H1 (cell line): ENCODE measurements at regions of chr14 and their contacts with region 1.

Region 1: GRCh38 chr14:64671591-64671990 is 32.6 kb upstream of the PLEKHG3 start:
- DNase-seq: no peak
- H3K4me3 ChIP-seq: no peak overlapping the region
- H3K27ac ChIP-seq: no peak overlapping the region
- H3K4me1 ChIP-seq: peaks cover 0 to 4% (median 0%) of the 10 kb centered on the region in 4 experiments; a peak in 2 of 7 replicates
- H3K27me3 ChIP-seq: no peaks in the 10 kb centered on the region
- CTCF ChIP-seq: peak in 2 of 3 experiments; percentile 73 to 77; a peak in 3 of 4 replicates
- EP300 ChIP-seq: no peak
- POLR2A ChIP-seq: no peak
- RAD21 ChIP-seq: peak; percentile 85 to 91

Region 2: DNA sequence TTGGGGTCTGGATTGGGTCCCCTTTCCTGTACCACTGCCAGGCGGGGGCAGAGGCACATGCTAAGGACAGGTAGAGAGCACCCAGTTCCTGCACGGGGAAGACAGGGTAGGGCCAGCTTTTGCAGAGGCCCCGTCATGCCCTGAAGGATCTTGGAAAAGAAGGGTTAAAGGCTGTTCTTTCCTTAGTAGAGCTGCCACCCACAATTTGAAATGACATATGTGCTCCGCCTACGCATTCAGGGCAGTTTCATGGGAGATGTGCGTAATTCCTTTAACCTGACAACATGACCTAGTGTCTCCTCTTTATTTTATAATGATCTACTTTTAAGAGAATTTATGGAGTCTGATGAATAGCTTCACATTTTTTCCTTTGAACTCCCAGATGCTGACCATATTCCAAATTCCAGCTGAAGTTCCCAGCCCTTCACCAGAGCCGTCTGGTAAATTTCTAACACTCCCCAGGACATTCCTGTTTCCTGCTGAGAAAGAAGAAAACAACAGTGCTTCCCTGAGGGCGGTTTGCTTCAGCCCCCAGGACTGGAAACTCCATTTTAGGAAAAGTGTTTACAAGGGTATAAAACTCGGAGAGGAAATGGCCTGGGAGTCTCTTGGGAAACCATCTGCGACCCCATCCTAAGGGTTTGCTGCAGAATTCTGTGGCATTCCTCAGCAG is 26.2 kb before region 1 on chr14:
- CTCF ChIA-PET with region 1: interaction called, 13 read pairs
- POLR2A ChIA-PET with region 1: interaction called, 5 read pairs
- DNase-seq: peak in 1 of 2 experiments; percentile 81
- H3K4me3 ChIP-seq: peak overlapping the region in 1 of 4 experiments; percentile 36; a peak in 1 of 8 replicates
- H3K27ac ChIP-seq: peak overlapping the region; percentile 68; the same call in 1 of the 2 replicates
- H3K4me1 ChIP-seq: peaks cover 3 to 16% (median 12%) of the 10 kb centered on the region in 4 experiments; a peak in 5 of 7 replicates
- H3K27me3 ChIP-seq: no peaks in the 10 kb centered on the region; a peak in 1 of 7 replicates
- CTCF ChIP-seq: no peak
- EP300 ChIP-seq: peak in 1 of 2 experiments; percentile 86; a peak in 2 of 3 replicates
- POLR2A ChIP-seq: no peak
- RAD21 ChIP-seq: no peak; a peak in 1 of 4 replicates

Region 3: GRCh38 chr14:64688811-64689281 is 17.3 kb after region 1 on chr14:
- CTCF ChIA-PET with region 1: interaction called, 11 read pairs
- POLR2A ChIA-PET with region 1: no interaction called
- DNase-seq: no peak
- H3K4me3 ChIP-seq: no peak overlapping the region
- H3K27ac ChIP-seq: no peak overlapping the region
- H3K4me1 ChIP-seq: peaks cover 0 to 9% (median 3%) of the 10 kb centered on the region in 4 experiments; a peak in 3 of 7 replicates
- H3K27me3 ChIP-seq: peaks cover 0 to 5% (median 5%) of the 10 kb centered on the region in 4 experiments; a peak in 4 of 7 replicates
- CTCF ChIP-seq: no peak
- EP300 ChIP-seq: no peak
- POLR2A ChIP-seq: no peak
- RAD21 ChIP-seq: no peak

Region 4: DNA sequence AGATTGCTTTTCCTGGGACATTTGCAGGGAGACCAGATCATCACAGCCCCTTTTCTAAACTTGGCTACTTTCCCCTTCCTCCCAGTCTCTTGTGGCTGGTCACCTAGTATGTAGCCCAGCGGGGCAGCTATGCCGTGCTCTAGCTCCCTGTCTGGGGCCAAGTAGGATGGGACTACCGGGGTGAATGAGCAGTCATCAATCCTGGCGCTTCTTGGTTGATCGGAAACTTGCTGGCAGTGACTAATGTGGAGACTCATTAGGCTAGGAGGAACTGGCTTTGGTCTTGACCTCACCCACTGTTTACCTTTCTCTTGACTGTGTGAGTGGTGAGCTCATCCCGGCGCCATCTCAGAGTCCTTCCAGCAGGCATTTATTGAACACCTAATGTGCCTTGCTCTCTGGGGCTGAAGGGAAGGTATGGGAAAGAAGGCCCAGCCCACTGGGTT is 48.6 kb after region 1 on chr14:
- CTCF ChIA-PET with region 1: interaction called, 33 read pairs
- POLR2A ChIA-PET with region 1: interaction called, 3 read pairs
- DNase-seq: no peak
- H3K4me3 ChIP-seq: no peak overlapping the region
- H3K27ac ChIP-seq: no peak overlapping the region
- H3K4me1 ChIP-seq: peaks cover 55 to 77% (median 63%) of the 10 kb centered on the region in 4 experiments
- H3K27me3 ChIP-seq: 0 out of 7 replicates have a peak, but pooled peaks cover 0 to 3% (median 0%) of the 10 kb centered on the region in 4 experiments
- CTCF ChIP-seq: no peak
- EP300 ChIP-seq: no peak
- POLR2A ChIP-seq: no peak
- RAD21 ChIP-seq: no peak

Region 5: DNA sequence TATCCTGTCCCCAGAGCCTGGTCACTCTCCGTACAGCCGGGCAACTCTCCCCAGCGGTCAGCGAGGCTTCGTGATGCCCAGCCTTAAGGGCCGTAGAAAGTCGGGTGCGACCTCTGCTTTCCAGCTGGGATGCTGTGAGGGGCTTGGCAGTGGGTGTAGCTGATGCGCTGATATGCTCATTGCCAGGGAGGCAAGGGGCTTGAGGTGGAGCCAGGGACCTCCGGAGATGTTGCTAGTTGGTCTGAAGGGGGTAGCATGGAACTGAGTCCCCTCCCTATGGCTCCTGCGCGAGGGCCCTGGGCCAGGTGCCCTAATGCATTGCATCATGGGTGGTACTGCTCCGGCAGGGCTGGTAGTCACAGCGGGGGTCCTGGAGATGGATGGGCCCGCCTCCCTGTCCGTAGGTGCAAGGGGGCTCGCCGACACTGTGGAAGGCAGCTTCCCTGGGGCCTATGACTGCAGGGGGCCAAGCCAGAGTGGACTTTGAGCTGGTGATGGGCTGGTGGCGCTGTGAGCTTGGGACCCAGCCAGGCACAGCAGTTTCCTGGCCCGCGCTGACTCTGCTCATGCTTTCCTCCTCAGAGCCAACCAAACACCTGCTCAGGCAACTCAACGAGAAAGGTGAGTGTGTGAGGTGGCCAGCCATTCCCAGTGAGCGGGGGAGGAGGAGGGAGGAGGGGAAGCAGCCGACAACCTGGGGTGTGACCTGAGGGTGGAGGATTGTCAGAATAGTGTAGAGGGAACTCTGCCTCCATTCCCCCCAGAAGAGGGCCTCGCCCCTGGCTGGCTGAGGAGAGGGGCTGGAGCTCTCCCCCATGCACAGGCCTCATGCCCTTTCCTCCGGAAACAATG is 64.9 kb after region 1 on chr14:
- CTCF ChIA-PET with region 1: interaction called, 19 read pairs
- POLR2A ChIA-PET with region 1: no interaction called
- DNase-seq: peak in 1 of 2 experiments; percentile 62
- H3K4me3 ChIP-seq: no peak overlapping the region
- H3K27ac ChIP-seq: no peak overlapping the region
- H3K4me1 ChIP-seq: peaks cover 0 to 13% (median 6%) of the 10 kb centered on the region in 4 experiments; a peak in 6 of 7 replicates
- H3K27me3 ChIP-seq: no peaks in the 10 kb centered on the region
- CTCF ChIP-seq: peak; percentile 59 to 66 (median 63)
- EP300 ChIP-seq: no peak
- POLR2A ChIP-seq: no peak
- RAD21 ChIP-seq: peak; percentile 38 to 60; a peak in 3 of 4 replicates

Region 6: DNA sequence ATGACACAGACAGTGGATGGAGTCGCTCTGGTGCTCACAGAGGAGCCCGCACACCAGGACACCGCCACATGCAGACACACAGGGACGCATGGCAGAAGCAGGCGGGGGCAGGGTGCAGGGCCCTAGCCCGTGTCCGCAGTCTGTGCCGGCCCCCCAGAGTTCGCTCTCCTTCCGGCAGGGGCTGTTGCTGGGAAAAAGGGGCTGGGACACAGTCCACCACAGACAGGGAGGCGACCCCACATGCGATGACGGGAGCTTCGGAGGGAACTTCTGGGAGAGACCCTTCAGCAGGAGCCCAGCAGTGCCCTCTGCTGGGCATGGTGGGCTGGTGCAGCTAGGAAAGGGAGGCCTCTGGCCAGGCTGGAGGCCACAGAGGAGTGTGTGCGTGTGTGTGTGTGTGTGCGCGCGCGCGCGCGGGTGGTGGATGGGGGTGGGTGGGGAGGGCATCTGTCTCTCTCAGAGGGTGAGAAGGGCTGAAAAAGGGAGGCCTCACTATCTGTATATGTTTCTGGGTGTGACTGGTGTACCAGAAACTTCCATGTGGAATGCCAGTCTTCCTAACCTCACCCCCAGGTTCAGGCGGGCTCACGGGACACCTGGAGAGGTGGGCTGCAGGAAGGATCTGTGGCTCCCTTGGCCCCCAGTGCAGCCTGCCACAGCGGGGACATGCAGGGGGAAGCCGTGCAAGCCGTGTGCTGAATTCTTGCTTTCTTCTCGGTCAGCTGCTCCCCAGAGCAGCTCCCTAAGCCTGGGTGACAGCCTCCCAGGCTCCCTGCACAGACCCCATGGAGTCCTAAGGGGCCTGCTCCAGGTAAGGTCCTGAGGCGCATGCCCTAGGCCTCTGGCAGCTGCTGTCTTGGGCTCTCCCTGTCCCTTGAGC is 93.3 kb after region 1 on chr14:
- CTCF ChIA-PET with region 1: interaction called, 74 read pairs
- POLR2A ChIA-PET with region 1: no interaction called
- DNase-seq: peak; percentile 61 to 86
- H3K4me3 ChIP-seq: peak overlapping the region in 2 of 4 experiments; percentile 2 to 27; a peak in 2 of 8 replicates
- H3K27ac ChIP-seq: no peak overlapping the region
- H3K4me1 ChIP-seq: peaks cover 4 to 34% (median 24%) of the 10 kb centered on the region in 4 experiments
- H3K27me3 ChIP-seq: peaks cover 0 to 2% (median 0%) of the 10 kb centered on the region in 4 experiments; a peak in 3 of 7 replicates
- CTCF ChIP-seq: peak in 2 of 3 experiments; percentile 89 to 90; a peak in 3 of 4 replicates
- EP300 ChIP-seq: no peak
- POLR2A ChIP-seq: no peak
- RAD21 ChIP-seq: peak; percentile 82 to 84